Activated CD4-positive, alpha-beta T cell treated with anti-CD3 and anti-CD28 coated beads for 36 hours (primary cell): ENCODE measurements at regions of chr6 and their contacts with region 1.

Region 1: DNA sequence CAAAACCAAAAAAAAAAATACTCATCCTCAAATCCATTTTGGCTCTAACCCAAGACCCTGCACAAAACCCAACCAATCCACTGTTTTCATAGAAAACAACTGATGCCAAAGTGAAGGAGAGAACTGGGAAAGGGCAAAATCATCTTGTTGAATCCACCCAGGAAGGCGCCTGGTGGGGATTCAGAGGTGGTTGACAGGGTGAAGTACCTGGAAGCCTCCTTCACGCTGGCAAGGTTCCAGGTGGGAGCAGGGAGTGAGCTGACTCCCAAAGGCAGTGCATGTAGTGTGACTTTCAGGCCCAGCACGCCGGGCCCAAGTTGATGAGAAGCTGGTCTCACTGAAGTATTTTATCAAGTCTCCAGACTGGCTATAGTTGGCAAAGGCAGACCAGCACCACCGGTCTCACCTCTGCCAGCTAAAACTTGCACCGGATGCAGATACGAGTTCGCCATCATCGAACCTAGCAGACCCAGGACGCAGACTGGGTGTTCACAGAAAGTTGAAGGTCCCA is 16.5 kb downstream of the PPP1R10 start:
- DNase-seq: no peak
- ATAC-seq: no peak
- H3K4me3 Mint-ChIP-seq: no peak overlapping the region
- H3K27ac Mint-ChIP-seq: no peak overlapping the region
- H3K4me1 Mint-ChIP-seq: peaks cover 17% of the 10 kb centered on the region
- H3K27me3 Mint-ChIP-seq: no peaks in the 10 kb centered on the region

Region 2: GRCh38 chr6:30463651-30464618 is 136.6 kb before region 1 on chr6:
- CTCF ChIA-PET with region 1: interaction called, 10 read pairs
- POLR2A ChIA-PET with region 1: no interaction called
- intact Hi-C with region 1: no loop called
- DNase-seq: peak; percentile 79
- ATAC-seq: peak; percentile 48
- H3K4me3 Mint-ChIP-seq: no peak overlapping the region
- H3K27ac Mint-ChIP-seq: no peak overlapping the region
- H3K4me1 Mint-ChIP-seq: peaks cover 26% of the 10 kb centered on the region
- H3K27me3 Mint-ChIP-seq: peaks cover 79% of the 10 kb centered on the region

Region 3: GRCh38 chr6:30571075-30571768 is 29.3 kb before region 1 on chr6 and contains the start of gene ABCF1:
- CTCF ChIA-PET with region 1: interaction called, 14 read pairs
- POLR2A ChIA-PET with region 1: no interaction called
- intact Hi-C with region 1: no loop called
- DNase-seq: peak; percentile 100
- ATAC-seq: peak; percentile 86
- H3K4me3 Mint-ChIP-seq: peak within 1 kb of the TSS; percentile 94
- H3K27ac Mint-ChIP-seq: peak within 1 kb of the TSS; percentile 100
- H3K4me1 Mint-ChIP-seq: peaks cover 62% of the 10 kb centered on the region
- H3K27me3 Mint-ChIP-seq: no peaks in the 10 kb centered on the region
- total RNA-seq, gene ABCF1: 100.0 to 105 TPM

Region 4: DNA sequence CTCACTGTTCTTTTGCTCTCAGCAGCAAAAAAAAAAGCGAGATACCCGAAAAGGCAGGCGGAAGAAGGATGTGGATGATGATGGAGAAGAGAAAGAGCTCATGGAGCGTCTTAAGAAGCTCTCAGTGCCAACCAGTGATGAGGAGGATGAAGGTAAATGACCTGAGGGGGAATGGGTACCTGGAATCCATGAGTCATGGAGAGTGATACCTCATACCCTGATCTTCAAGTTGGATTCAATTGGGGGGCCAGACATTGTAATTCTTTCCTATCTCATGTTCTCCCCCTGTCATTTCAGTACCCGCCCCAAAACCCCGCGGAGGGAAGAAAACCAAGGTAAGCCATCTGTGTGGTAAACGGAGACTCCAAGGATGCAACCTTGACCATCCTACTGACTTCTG is 22.5 kb before region 1 on chr6:
- CTCF ChIA-PET with region 1: interaction called, 14 read pairs
- POLR2A ChIA-PET with region 1: interaction called, 4 read pairs
- intact Hi-C with region 1: no loop called
- DNase-seq: no peak
- ATAC-seq: no peak
- H3K4me3 Mint-ChIP-seq: no peak overlapping the region
- H3K27ac Mint-ChIP-seq: peak overlapping the region; percentile 74
- H3K4me1 Mint-ChIP-seq: peaks cover 36% of the 10 kb centered on the region
- H3K27me3 Mint-ChIP-seq: no peaks in the 10 kb centered on the region